Endothelial cell of umbilical vein (primary cell): ENCODE measurements at regions of chr5 and their contacts with region 1.

Region 1: DNA sequence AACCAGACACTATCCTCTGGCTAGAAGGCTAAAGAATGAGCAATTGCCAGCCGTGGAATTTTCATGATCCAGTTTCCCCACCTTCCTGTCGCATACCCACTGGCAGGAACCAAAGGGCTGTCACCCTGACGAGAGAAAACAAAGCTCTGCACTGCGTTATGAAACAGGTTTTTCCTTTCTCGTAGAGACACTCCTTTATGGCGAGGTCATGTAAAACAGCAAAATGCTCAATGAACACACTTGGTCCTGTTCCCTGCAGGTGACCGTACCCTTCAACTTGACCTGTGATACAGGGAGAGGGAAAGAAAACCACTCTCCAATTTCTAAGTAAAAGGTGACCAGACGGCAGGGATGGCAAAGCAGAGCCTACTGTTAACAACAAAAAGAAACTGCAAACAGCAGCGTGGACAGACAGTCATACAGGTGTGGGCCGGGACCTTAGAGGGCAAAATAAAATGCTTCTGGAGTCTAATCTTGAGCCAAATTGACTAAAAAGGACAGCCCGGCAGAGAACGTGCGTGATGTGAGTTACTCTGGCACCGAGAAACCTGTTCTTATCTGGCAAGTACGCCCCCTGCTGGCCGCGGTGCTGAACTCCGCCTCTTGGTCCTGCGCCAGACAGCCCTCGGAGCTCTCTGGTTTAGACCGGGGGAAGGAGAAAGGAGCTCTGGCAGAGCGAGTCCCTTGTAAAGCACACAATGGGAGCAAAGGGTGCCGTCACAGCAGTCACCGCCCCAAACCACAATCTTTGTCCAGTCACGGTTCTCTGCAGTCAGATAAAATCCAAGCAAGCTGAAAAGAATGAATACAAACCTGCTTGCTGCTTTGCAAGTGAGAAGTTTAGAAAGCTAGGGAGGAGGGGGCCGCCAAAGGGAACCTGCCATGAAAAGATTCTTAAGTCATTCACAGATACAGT is 98.9 kb downstream of the EFNA5 start:
- DNase-seq: peak; percentile 97
- H3K4me3 ChIP-seq: peak overlapping the region in 2 of 3 experiments; percentile 31 to 59
- H3K27ac ChIP-seq: peak overlapping the region; percentile 88
- H3K4me1 ChIP-seq: peaks cover 36% of the 10 kb centered on the region
- H3K27me3 ChIP-seq: no peaks in the 10 kb centered on the region
- CTCF ChIP-seq: peak; percentile 93 to 94
- POLR2A ChIP-seq: no peak

Region 2: DNA sequence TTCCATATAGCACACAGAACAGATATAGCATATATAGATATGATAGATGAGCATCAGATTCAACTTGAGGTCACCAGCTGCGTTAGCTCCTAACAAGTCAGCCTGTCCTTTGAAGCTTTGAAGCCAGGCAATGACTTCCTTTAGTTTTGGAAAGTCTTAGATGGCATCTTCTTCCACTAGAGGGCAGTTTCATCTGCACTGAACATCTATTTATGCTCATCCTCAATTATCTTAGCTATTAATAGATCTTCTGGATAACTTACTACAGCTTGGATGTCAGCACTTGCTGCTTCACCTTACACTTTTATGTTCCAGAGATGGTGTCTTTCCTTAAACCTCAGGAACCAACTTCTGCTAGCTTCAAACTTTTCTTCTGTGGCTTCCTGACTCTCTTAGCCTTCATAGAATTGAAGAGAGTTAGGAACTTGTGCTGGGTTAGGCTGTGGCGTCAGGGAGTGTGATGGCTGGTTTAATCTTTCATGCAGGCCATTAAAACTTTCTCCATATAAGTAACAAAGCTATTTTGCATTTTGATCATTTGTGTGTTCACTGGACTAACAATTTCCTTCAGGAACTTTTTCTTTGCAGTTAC is 1302.5 kb before region 1 on chr5:
- CTCF ChIA-PET with region 1: interaction called, 6 read pairs
- POLR2A ChIA-PET with region 1: no interaction called
- dilution Hi-C with region 1: no loop called
- intact Hi-C with region 1: loop called (anchors 10 kb)
- DNase-seq: peak; percentile 43
- H3K4me3 ChIP-seq: no peak overlapping the region
- H3K27ac ChIP-seq: no peak overlapping the region
- H3K4me1 ChIP-seq: no peaks in the 10 kb centered on the region
- H3K27me3 ChIP-seq: no peaks in the 10 kb centered on the region
- CTCF ChIP-seq: peak; percentile 45 to 53
- POLR2A ChIP-seq: no peak

Region 3: DNA sequence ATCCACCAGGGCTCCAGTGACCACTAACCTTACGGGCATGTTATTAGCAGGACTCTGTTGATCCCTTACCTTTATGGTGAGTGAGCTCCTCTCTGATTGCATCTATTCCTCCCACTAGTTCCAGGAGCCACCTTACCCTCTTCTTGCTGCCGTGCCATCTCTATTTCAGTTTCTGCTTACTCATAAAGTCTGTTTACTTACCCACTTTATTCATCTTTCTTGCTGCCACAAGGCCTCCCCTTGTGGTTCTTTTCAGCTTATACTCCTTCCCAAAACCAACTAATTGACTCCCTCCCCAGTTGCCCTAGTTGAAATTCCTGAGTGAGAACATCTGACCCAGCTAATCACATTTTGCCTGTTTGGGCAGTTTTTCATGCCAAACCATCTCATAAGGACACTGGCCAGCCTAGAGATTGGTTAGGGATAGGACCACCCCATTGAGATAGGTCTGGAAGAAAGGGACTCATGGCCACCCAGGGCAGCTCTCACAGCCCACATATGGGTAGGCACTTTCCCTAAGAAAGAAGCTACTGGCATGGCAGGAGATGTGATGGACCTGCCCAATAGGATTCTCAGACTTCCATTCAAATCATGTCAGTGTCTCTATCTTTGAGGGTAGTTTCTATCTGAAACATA is 313.9 kb before region 1 on chr5:
- CTCF ChIA-PET with region 1: interaction called, 15 read pairs
- POLR2A ChIA-PET with region 1: no interaction called
- dilution Hi-C with region 1: no loop called
- intact Hi-C with region 1: no loop called
- DNase-seq: no peak
- H3K4me3 ChIP-seq: no peak overlapping the region
- H3K27ac ChIP-seq: no peak overlapping the region
- H3K4me1 ChIP-seq: no peaks in the 10 kb centered on the region
- H3K27me3 ChIP-seq: no peaks in the 10 kb centered on the region
- CTCF ChIP-seq: no peak
- POLR2A ChIP-seq: no peak

Region 4: DNA sequence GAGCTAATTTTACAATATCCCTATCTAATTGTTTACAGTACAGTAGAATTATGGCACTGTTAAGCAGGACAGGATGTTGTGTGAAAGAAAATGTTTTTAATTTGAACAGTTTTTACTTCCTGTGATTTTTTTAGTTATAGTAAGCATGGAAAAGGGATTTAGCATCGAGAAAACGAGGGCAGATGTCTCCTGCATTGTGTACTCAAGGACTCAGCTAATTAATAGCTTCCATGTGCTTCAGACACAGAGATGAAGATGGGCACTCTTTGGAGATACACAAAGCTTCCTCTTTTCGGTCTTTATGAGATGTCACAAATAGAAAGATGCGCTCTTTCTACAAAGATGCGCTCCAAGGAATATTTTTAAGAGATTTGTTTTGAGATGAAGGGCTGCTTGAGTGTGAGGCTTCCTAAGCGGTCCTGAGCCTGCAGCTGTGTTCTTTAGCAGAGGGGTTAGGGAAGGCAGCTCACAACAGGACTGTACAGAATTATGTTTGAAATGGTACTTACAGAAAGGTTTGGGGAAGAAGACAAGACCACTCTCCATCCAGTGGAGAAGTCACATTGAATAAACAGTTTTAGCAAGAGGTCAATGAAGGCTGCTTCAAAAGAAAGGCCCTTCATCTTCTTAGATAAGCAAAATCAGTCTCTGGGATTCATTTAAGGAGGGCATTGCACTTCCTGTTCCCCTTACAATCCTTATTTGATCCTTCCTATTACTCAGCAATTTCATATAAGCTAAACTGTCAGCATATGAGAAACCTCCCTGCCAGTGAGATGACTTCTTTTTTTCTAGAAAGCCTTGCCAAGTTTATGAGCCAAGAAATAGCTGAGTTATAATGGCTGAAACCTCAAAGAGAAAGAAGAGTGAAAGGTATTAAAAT is 212.6 kb before region 1 on chr5:
- CTCF ChIA-PET with region 1: interaction called, 13 read pairs
- POLR2A ChIA-PET with region 1: no interaction called
- dilution Hi-C with region 1: no loop called
- intact Hi-C with region 1: no loop called
- DNase-seq: peak; percentile 41
- H3K4me3 ChIP-seq: no peak overlapping the region
- H3K27ac ChIP-seq: no peak overlapping the region
- H3K4me1 ChIP-seq: peaks cover 7% of the 10 kb centered on the region
- H3K27me3 ChIP-seq: no peaks in the 10 kb centered on the region
- CTCF ChIP-seq: no peak
- POLR2A ChIP-seq: no peak

Region 5: DNA sequence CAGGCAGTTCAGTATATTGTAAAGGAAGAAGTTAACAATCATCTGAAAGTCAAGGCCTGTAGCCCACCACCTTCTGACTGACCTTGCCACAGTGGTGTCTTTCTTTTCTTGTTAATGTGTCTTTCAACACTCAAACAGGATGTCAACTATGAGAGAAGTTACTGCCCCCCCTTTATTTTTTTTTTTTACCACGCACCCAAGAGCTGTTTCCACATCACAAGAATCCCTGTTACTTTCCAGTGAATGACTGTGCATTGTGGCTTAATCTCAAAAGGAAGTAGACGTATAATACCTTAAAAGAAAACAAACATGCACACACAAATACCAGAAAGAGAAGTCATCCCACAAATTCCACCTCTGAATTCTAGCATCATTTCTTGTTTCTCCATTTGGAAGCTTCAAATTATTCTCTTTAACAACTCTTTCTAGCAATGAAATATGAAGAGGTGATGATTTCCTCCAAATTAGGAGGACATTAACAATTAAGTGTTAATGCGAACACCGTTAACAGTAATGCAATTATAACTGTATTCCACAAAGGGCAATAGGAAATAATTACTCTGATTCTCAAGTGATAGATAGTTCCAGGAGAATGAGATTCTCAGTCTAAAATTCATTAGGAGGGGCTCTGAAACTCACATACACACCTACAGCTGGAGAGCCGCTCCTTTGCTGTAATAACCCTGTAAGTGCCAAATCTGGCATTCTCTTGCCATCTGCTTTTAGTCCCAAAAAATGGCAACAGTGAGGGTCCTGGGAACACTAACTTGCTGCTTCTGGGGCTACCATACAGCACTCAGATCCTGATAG is 102.2 kb before region 1 on chr5:
- CTCF ChIA-PET with region 1: interaction called, 57 read pairs
- POLR2A ChIA-PET with region 1: interaction called, 3 read pairs
- dilution Hi-C with region 1: no loop called
- intact Hi-C with region 1: loop called (anchors 1 kb)
- DNase-seq: peak; percentile 96
- H3K4me3 ChIP-seq: peak overlapping the region in 1 of 3 experiments; percentile 16
- H3K27ac ChIP-seq: peak overlapping the region; percentile 97
- H3K4me1 ChIP-seq: peaks cover 61% of the 10 kb centered on the region
- H3K27me3 ChIP-seq: no peaks in the 10 kb centered on the region
- CTCF ChIP-seq: no peak
- POLR2A ChIP-seq: no peak

Region 6: GRCh38 chr5:107542428-107542827 is 29.5 kb before region 1 on chr5:
- CTCF ChIA-PET with region 1: interaction called, 24 read pairs
- POLR2A ChIA-PET with region 1: no interaction called
- dilution Hi-C with region 1: no loop called
- intact Hi-C with region 1: loop called (anchors 1 kb)
- DNase-seq: peak; percentile 98
- H3K4me3 ChIP-seq: peak overlapping the region in 1 of 3 experiments; percentile 55
- H3K27ac ChIP-seq: peak overlapping the region; percentile 96
- H3K4me1 ChIP-seq: peaks cover 29% of the 10 kb centered on the region
- H3K27me3 ChIP-seq: no peaks in the 10 kb centered on the region
- CTCF ChIP-seq: no peak
- POLR2A ChIP-seq: no peak

Region 7: GRCh38 chr5:107864793-107865192 is 292.9 kb after region 1 on chr5:
- CTCF ChIA-PET with region 1: no interaction called
- POLR2A ChIA-PET with region 1: no interaction called
- dilution Hi-C with region 1: no loop called
- intact Hi-C with region 1: no loop called
- DNase-seq: peak; percentile 31
- H3K4me3 ChIP-seq: no peak overlapping the region
- H3K27ac ChIP-seq: no peak overlapping the region
- H3K4me1 ChIP-seq: peaks cover 9% of the 10 kb centered on the region
- H3K27me3 ChIP-seq: no peaks in the 10 kb centered on the region
- CTCF ChIP-seq: no peak
- POLR2A ChIP-seq: no peak

Region 8: GRCh38 chr5:107893642-107894041 is 321.8 kb after region 1 on chr5:
- CTCF ChIA-PET with region 1: no interaction called
- POLR2A ChIA-PET with region 1: no interaction called
- dilution Hi-C with region 1: no loop called
- intact Hi-C with region 1: no loop called
- DNase-seq: peak; percentile 81
- H3K4me3 ChIP-seq: no peak overlapping the region
- H3K27ac ChIP-seq: no peak overlapping the region
- H3K4me1 ChIP-seq: peaks cover 8% of the 10 kb centered on the region
- H3K27me3 ChIP-seq: no peaks in the 10 kb centered on the region
- CTCF ChIP-seq: no peak
- POLR2A ChIP-seq: no peak